Activated naive CD4-positive, alpha-beta T cell treated with anti-CD3 and anti-CD28 coated beads, Interleukin-2, amount 10 ng/mL, durations not matched to agents 7 days and 5 days (primary cell): ENCODE measurements at regions of chr21 and their contacts with region 1.

Region 1: GRCh38 chr21:37009740-37010341 is 3.3 kb downstream of the RIPPLY3 start:
- DNase-seq: peak; percentile 86
- H3K4me3 Mint-ChIP-seq: peak overlapping the region; percentile 41
- H3K27ac Mint-ChIP-seq: no peak overlapping the region
- H3K4me1 Mint-ChIP-seq: peaks cover 20% of the 10 kb centered on the region
- H3K27me3 Mint-ChIP-seq: peaks cover 80% of the 10 kb centered on the region

Region 2: DNA sequence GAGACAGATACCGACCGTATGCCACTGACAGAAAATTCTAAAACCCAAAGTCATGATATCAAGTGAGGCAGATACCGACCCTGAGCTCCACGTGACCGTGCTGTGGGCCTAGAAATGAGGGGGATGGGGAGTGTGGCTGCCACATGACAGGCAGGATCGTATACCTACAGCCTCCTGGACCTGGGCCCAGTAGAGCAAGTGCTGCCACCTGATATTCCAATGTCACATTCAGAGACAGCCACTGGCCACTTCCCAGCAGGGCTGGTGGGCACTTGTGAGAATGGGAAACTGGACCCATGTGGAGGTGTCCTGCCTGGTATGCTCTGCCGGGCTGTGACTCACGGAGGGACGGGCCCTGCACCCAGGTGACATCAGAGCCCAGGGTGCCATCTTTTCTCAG is 485.4 kb before region 1 on chr21:
- CTCF ChIA-PET with region 1: no interaction called
- DNase-seq: no peak
- H3K4me3 Mint-ChIP-seq: no peak overlapping the region
- H3K27ac Mint-ChIP-seq: no peak overlapping the region
- H3K4me1 Mint-ChIP-seq: no peaks in the 10 kb centered on the region
- H3K27me3 Mint-ChIP-seq: peaks cover 19% of the 10 kb centered on the region

Region 3: GRCh38 chr21:36945496-36946138 is 64.2 kb before region 1 on chr21:
- CTCF ChIA-PET with region 1: interaction called, 12 read pairs
- DNase-seq: no peak
- H3K4me3 Mint-ChIP-seq: no peak overlapping the region
- H3K27ac Mint-ChIP-seq: no peak overlapping the region
- H3K4me1 Mint-ChIP-seq: no peaks in the 10 kb centered on the region
- H3K27me3 Mint-ChIP-seq: no peaks in the 10 kb centered on the region

Region 4: GRCh38 chr21:36976882-36977651 is 32.8 kb before region 1 on chr21:
- CTCF ChIA-PET with region 1: interaction called, 18 read pairs
- DNase-seq: peak; percentile 38
- H3K4me3 Mint-ChIP-seq: no peak overlapping the region
- H3K27ac Mint-ChIP-seq: no peak overlapping the region
- H3K4me1 Mint-ChIP-seq: peaks cover 25% of the 10 kb centered on the region
- H3K27me3 Mint-ChIP-seq: peaks cover 31% of the 10 kb centered on the region

Region 5: GRCh38 chr21:36989699-36990507 is 19.9 kb before region 1 on chr21:
- CTCF ChIA-PET with region 1: interaction called, 21 read pairs
- DNase-seq: peak; percentile 92
- H3K4me3 Mint-ChIP-seq: peak overlapping the region; percentile 75
- H3K27ac Mint-ChIP-seq: peak overlapping the region; percentile 89
- H3K4me1 Mint-ChIP-seq: peaks cover 53% of the 10 kb centered on the region
- H3K27me3 Mint-ChIP-seq: peaks cover 7% of the 10 kb centered on the region